ENCODE measurements at regions of chr10 and their contacts with region 1.

Region 1: DNA sequence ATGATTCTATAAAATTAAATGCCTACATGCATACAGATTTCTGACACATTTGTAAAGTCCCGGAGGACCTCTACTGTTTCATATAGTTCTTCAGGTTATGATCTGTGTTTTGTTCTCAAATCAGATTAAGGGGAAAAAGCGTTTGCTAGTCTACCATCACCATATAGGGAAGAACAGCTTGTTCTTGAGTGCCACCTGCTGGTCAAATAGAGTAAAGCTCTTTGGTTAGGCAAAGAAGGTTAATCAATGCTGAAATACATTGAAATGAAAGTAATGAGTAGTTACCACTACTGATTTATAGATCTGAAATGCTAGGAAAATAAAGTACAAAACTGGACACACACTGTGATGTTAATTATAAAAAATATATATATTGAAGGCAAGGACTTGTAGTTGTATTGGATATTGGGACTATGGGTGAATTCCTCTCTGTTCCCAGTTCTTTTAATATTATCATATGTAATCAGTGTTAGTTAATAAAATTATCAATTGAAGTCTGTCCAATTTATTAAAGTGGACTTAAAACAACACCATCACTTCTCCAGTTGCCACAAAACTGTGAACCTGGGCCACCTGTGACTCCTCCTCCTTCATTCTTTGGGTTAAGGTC is 72.6 kb upstream of the PDLIM1 start:
- DNase-seq: no peak
- ATAC-seq: peak; percentile 60
- H3K4me3 Mint-ChIP-seq: no peak overlapping the region
- H3K27ac Mint-ChIP-seq: no peak overlapping the region; the same call in 1 of the 2 replicates
- H3K4me1 Mint-ChIP-seq: peaks cover 22% of the 10 kb centered on the region
- H3K27me3 Mint-ChIP-seq: no peaks in the 10 kb centered on the region
- CTCF ChIP-seq: peak; percentile 75

Region 2: GRCh38 chr10:95133016-95133752 is 230.2 kb before region 1 on chr10:
- CTCF ChIA-PET with region 1: interaction called, 17 read pairs
- POLR2A ChIA-PET with region 1: no interaction called
- DNase-seq: peak; percentile 88
- ATAC-seq: peak; percentile 96
- H3K4me3 Mint-ChIP-seq: no peak overlapping the region
- H3K27ac Mint-ChIP-seq: peak overlapping the region; percentile 15
- H3K4me1 Mint-ChIP-seq: peaks cover 8% of the 10 kb centered on the region
- H3K27me3 Mint-ChIP-seq: peaks cover 2% of the 10 kb centered on the region; the same call in 1 of the 2 replicates
- CTCF ChIP-seq: peak; percentile 88

Region 3: DNA sequence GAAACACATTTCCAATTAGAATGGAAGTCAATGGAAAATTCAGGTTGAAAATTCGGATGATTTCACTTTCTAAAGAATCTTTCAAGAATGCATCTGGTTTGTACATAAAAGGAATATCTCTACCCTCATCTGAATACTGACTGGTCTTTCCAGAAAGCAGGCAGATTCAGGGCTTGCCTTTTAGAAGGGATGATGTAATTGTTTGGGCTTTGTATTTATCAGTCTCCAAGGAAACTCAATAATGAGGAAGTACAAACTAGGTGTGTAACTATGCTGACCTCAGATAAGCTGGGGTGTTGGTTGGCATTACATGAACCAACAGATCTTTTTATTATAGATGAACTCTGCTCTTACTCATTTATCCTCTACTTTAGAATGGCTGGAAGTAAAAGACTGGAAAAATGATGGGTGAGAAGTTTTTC is 96.7 kb before region 1 on chr10:
- CTCF ChIA-PET with region 1: interaction called, 10 read pairs
- POLR2A ChIA-PET with region 1: no interaction called
- DNase-seq: no peak
- ATAC-seq: no peak
- H3K4me3 Mint-ChIP-seq: no peak overlapping the region
- H3K27ac Mint-ChIP-seq: peak overlapping the region; percentile 97
- H3K4me1 Mint-ChIP-seq: peaks cover 61% of the 10 kb centered on the region
- H3K27me3 Mint-ChIP-seq: no peaks in the 10 kb centered on the region
- CTCF ChIP-seq: no peak

Region 4: DNA sequence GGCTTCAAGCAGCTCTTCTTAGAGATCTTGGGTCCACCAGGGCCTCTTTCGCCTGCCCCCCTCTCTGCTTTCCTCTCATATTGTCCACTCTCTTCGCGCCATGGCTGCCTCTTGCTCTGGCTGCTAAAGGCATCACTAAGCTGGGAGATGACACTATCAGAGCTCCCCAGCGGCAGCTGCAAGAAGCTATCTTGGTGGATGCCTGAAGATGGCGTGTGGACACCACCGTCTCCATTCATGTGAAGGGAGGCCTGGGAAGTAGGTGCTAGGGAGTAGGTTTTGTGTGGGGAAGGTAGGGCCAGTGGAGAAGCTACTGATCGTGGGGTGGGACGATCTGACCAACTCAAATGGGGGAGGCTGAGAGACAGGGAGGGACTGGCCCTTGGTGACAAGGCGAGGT is 26.7 kb before region 1 on chr10:
- CTCF ChIA-PET with region 1: interaction called, 10 read pairs
- POLR2A ChIA-PET with region 1: interaction called, 3 read pairs
- DNase-seq: no peak
- ATAC-seq: no peak
- H3K4me3 Mint-ChIP-seq: no peak overlapping the region
- H3K27ac Mint-ChIP-seq: peak overlapping the region; percentile 28; the same call in 1 of the 2 replicates
- H3K4me1 Mint-ChIP-seq: peaks cover 23% of the 10 kb centered on the region
- H3K27me3 Mint-ChIP-seq: no peaks in the 10 kb centered on the region
- CTCF ChIP-seq: no peak

Region 5: GRCh38 chr10:95469676-95470075 is 106.3 kb after region 1 on chr10:
- CTCF ChIA-PET with region 1: no interaction called
- POLR2A ChIA-PET with region 1: no interaction called
- DNase-seq: no peak
- ATAC-seq: peak; percentile 12; the same call in 1 of the 2 replicates
- H3K4me3 Mint-ChIP-seq: no peak overlapping the region
- H3K27ac Mint-ChIP-seq: peak overlapping the region; percentile 66
- H3K4me1 Mint-ChIP-seq: peaks cover 74% of the 10 kb centered on the region
- H3K27me3 Mint-ChIP-seq: no peaks in the 10 kb centered on the region
- CTCF ChIP-seq: no peak